Activated T-helper 1 cell treated with anti-CD3 and anti-CD28 coated beads, Interleukin-12 subunit alpha, Interleukin-12 subunit beta, Interleukin-2, Interleukin-4 antibody, amounts not matched to agents 30 ng/mL and 10 ng/mL and 1 ng/mL, durations not matched to agents 14 hours and 24 hours and 36 hours (primary cell): ENCODE measurements at regions of chr10 and their contacts with region 1.

Region 1: DNA sequence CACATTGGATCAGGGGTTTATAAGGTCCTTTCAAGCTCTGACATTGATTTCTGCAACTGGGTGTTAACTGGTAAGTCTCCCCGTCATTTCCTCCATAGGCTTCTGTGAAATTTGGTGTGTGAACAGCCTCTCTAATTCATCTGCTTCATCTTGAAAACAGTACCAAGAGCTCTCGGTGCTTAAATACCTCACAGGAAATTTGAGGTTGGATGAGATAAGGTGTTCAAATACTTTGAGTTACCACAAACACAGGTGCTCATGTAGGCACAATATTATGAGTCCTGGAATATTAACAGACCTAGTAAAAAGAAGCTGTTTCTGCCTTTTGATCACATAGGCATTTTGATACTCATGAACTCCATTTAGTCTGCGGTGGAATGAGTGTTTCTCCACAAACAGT is 85.2 kb downstream of the RTKN2 start:
- DNase-seq: peak; percentile 61
- H3K4me3 Mint-ChIP-seq: peak overlapping the region; percentile 5
- H3K27ac Mint-ChIP-seq: peak overlapping the region; percentile 92
- H3K4me1 Mint-ChIP-seq: peaks cover 88% of the 10 kb centered on the region
- H3K27me3 Mint-ChIP-seq: no peaks in the 10 kb centered on the region

Region 2: GRCh38 chr10:61342858-61343572 is 840.4 kb before region 1 on chr10:
- intact Hi-C with region 1: no loop called
- DNase-seq: no peak
- H3K4me3 Mint-ChIP-seq: no peak overlapping the region
- H3K27ac Mint-ChIP-seq: no peak overlapping the region
- H3K4me1 Mint-ChIP-seq: no peaks in the 10 kb centered on the region
- H3K27me3 Mint-ChIP-seq: no peaks in the 10 kb centered on the region

Region 3: DNA sequence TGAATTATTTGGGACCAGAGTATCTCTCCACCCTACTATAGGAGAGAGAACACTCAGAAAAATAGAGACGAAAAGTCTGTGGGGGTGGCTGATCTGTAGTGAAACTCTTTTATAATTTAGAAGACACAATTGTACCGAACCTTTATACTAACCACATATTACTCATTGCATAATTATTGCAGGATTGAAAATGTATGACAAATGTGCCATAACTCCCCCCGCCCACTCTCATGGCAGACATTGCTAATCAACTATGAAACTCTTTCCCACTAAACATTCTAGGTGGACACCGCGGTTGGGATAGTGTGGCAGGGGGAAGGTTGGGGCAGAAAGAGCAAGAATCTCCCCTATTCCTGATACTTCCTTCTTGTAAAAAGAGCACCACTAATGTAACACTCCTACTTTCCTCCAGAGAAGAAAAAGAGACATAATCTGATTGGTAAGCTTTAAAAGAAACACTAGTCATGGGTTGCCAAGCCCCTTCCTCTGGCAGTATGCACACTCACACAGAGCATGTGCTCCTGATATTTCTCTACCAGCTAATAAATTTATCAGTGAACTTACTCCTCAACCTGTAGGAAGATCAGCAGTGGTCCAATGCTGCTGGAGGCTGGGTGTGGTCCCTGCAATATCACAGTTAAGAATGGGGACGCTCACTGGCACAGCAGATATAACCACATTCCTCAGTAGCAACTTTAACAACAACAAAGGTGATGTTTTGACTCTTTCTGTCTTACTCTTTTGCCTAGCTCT is 300.6 kb before region 1 on chr10:
- intact Hi-C with region 1: loop called (anchors 1 kb)
- DNase-seq: no peak
- H3K4me3 Mint-ChIP-seq: no peak overlapping the region
- H3K27ac Mint-ChIP-seq: peak overlapping the region; percentile 44
- H3K4me1 Mint-ChIP-seq: peaks cover 19% of the 10 kb centered on the region
- H3K27me3 Mint-ChIP-seq: peaks cover 1% of the 10 kb centered on the region

Region 4: DNA sequence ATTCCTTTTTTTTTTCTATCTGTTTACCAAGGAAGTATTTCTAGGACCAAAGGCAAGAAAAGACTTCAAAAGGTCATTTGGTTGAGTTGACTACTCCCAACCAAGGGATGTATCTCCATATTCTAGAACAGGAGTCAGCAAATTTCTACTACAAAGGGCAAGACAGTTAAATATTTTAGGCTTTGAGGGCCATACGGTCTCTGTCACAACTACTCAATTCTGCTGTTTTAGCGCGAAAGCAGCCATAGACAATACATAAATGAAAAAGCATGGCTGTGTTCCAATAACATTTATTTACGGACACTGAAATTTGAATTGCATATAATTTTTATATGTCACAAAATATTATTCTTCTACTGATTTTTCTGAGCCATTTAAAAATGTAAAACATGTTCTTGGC is 290.5 kb before region 1 on chr10:
- intact Hi-C with region 1: no loop called
- DNase-seq: no peak
- H3K4me3 Mint-ChIP-seq: no peak overlapping the region
- H3K27ac Mint-ChIP-seq: no peak overlapping the region
- H3K4me1 Mint-ChIP-seq: peaks cover 23% of the 10 kb centered on the region
- H3K27me3 Mint-ChIP-seq: peaks cover 3% of the 10 kb centered on the region

Region 5: GRCh38 chr10:61992671-61993668 is 190.5 kb before region 1 on chr10:
- intact Hi-C with region 1: loop called (anchors 1 kb)
- DNase-seq: peak; percentile 69
- H3K4me3 Mint-ChIP-seq: peak overlapping the region; percentile 76
- H3K27ac Mint-ChIP-seq: peak overlapping the region; percentile 90
- H3K4me1 Mint-ChIP-seq: peaks cover 86% of the 10 kb centered on the region
- H3K27me3 Mint-ChIP-seq: no peaks in the 10 kb centered on the region

Region 6: DNA sequence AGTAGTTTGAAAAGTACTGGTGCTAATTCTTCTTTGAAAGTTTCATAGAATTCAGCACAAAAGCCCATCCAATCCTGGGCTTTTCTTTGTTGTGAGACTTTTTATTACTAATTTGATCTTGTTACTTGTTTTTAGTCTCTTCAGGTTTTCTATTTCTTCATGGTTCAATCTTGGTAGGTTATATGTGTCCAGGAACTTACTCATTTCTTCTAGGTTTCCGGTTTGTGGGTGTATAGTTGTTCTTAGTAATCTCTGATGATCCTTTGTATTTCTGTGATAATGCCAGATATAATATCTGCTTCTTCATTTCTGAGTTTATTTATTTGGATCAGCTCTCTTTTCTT is 62.3 kb before region 1 on chr10:
- intact Hi-C with region 1: loop called (anchors 1 kb)
- DNase-seq: no peak
- H3K4me3 Mint-ChIP-seq: peak overlapping the region; percentile 1
- H3K27ac Mint-ChIP-seq: peak overlapping the region; percentile 64
- H3K4me1 Mint-ChIP-seq: peaks cover 16% of the 10 kb centered on the region
- H3K27me3 Mint-ChIP-seq: no peaks in the 10 kb centered on the region

Region 7: DNA sequence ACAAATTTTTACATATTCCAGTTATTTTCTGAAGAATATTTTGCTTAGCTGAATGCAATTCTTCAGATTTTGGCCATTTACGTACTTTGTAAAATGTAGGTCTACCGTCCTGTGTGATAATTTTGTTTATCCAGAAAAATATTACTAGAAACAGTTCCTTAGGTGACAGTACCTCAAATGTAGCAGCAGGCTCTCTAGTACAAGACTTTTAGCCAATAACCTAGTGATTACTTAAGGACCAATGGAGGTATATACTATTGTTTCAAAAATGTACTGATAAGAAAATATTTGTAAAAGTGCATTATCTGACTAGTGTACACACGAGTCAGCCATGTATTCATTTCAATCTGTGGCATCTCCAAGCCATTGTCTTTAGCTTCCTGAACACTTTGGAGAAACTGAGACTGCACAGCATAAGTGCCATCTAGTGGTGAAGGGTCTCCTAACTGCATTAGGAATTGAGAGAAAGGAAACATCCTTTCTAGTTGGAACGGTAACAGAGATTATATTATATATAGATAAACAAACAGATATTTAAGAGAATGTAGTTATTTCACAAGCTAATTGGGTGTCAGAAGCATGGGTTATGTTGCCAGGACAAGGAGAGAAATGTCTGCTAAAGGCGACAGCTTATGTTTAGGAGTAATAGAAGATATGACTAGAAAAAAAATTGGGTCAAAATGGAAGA is 61.5 kb after region 1 on chr10:
- intact Hi-C with region 1: loop called (anchors 1 kb)
- DNase-seq: peak; percentile 47
- H3K4me3 Mint-ChIP-seq: peak overlapping the region; percentile 60
- H3K27ac Mint-ChIP-seq: peak overlapping the region; percentile 45
- H3K4me1 Mint-ChIP-seq: peaks cover 45% of the 10 kb centered on the region
- H3K27me3 Mint-ChIP-seq: no peaks in the 10 kb centered on the region

Region 8: DNA sequence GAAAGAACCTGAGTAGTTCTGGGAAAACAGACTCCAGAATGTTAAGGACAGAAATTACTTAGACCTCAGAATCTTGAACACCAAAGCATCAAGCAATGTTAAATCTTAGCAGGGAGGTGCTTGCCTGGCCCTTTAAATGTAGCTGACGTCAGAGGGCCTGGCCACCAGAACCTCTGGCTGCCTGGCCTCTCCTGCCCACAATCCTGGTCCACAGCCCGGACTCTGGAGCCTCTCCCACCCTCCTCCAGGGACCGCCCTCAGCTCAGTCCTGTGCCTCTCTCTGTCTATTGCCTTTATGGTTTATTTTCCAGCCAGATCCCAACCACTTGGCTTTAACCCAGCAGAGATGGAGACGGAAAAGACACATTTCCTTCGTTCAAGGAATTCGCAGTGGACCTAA is 674.9 kb after region 1 on chr10:
- intact Hi-C with region 1: loop called (anchors 5 kb)
- DNase-seq: no peak
- H3K4me3 Mint-ChIP-seq: no peak overlapping the region
- H3K27ac Mint-ChIP-seq: no peak overlapping the region
- H3K4me1 Mint-ChIP-seq: peaks cover 60% of the 10 kb centered on the region
- H3K27me3 Mint-ChIP-seq: peaks cover 6% of the 10 kb centered on the region